ENCODE measurements at regions of chr3 and their contacts with region 1.

Region 1: GRCh38 chr3:194671900-194672808 is at the start of gene LSG1:
- DNase-seq: peak; percentile 87 to 97
- ATAC-seq: peak; percentile 96
- H3K4me3 ChIP-seq: peak within 1 kb of the TSS; percentile 97
- H3K4me3 Mint-ChIP-seq: peak within 1 kb of the TSS; percentile 98
- H3K27ac ChIP-seq: peak within 1 kb of the TSS; percentile 98
- H3K27ac Mint-ChIP-seq: peak within 1 kb of the TSS; percentile 98 to 99
- H3K4me1 ChIP-seq: peaks cover 14% of the 10 kb centered on the region
- H3K4me1 Mint-ChIP-seq: peaks cover 29 to 40% of the 10 kb centered on the region in 2 donors
- H3K27me3 ChIP-seq: no peaks in the 10 kb centered on the region
- H3K27me3 Mint-ChIP-seq: peaks cover 0 to 6% of the 10 kb centered on the region in 2 donors
- CTCF ChIP-seq: no peak
- total RNA-seq, gene LSG1: 56.4 to 67.6 (median 64.9) TPM

Region 2: DNA sequence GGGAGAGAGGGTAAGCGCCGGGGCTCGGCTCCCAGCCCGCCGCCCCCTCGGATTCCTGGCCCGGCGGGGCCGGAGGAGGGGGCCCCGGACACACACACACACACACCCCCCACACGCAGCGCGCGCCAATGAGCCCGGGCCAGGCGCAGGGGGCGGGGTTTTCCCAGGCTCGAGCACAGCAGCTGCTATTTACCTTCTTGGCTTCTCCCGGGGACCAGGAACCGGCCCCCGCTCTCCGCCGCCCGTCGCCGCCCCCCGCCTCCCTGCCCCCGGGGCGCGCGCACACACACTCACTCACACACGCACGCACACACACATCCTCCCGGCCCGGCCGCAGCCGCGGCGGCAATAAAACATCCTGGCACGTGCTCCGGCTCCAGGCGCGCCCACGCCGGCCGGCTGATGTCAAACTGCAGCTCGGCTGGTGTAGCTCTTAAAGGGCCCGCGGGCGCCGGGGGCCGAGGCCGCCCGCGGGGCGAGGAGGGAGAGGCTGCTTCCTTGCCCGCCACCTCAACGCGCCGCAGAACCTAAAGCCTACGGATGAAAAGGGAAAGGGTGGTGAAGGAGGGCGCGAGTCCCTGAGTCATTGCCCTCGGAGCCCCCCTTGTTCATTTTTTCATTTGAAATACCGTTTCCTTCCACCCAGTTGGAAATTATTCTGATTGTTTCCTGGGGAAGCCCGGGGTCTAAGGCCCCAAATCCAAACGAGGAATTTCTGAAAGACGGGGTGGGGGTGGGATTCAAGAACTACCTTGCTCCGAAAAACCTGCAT is 537.2 kb before region 1 on chr3:
- intact Hi-C with region 1: no loop called
- DNase-seq: peak; percentile 77 to 89
- ATAC-seq: peak; percentile 46 to 72 (median 59)
- H3K4me3 ChIP-seq: peak overlapping the region; percentile 48
- H3K4me3 Mint-ChIP-seq: peak overlapping the region; percentile 93
- H3K27ac ChIP-seq: peak overlapping the region; percentile 60
- H3K27ac Mint-ChIP-seq: peak overlapping the region; percentile 86 to 94
- H3K4me1 ChIP-seq: peaks cover 50% of the 10 kb centered on the region
- H3K4me1 Mint-ChIP-seq: peaks cover 38 to 45% of the 10 kb centered on the region in 2 donors
- H3K27me3 ChIP-seq: peaks cover 78% of the 10 kb centered on the region
- H3K27me3 Mint-ChIP-seq: peaks cover 60 to 66% of the 10 kb centered on the region in 2 donors
- CTCF ChIP-seq: no peak

Region 3: GRCh38 chr3:194323785-194324735 is 348.1 kb before region 1 on chr3:
- intact Hi-C with region 1: no loop called
- DNase-seq: peak; percentile 33 to 66
- ATAC-seq: peak; percentile 49 to 73 (median 60)
- H3K4me3 ChIP-seq: peak overlapping the region; percentile 26
- H3K4me3 Mint-ChIP-seq: no peak overlapping the region
- H3K27ac ChIP-seq: no peak overlapping the region
- H3K27ac Mint-ChIP-seq: no peak overlapping the region
- H3K4me1 ChIP-seq: peaks cover 11% of the 10 kb centered on the region
- H3K4me1 Mint-ChIP-seq: peaks cover 0 to 7% of the 10 kb centered on the region in 2 donors
- H3K27me3 ChIP-seq: no peaks in the 10 kb centered on the region
- H3K27me3 Mint-ChIP-seq: peaks cover 10 to 12% of the 10 kb centered on the region in 2 donors
- CTCF ChIP-seq: no peak

Region 4: DNA sequence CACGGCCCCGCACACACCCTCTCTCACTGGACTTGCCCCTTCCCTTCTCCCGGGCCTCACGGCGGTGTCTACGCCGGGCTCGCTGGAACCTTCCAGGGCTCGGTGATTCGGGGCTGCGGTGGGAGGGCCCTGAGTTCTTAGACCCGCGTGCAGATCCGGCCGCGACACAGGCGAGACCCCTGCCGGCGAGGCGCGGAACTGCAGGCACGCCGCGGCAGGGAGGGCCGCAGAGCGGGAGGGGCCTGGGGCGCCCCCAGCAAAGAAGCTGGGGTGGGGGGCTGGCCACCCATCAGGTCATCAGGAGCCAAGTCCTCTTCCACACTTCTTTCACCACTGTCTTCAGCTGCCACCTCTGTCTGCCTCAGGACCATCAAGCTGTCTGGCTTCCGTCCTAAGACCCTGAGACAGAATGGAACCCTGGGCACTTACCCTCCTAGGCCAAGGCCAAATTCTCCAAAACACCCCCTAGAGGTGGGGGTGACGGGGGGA is 434.3 kb after region 1 on chr3:
- intact Hi-C with region 1: loop called (anchors 1 kb)
- DNase-seq: peak; percentile 74 to 82
- ATAC-seq: peak; percentile 89 to 99 (median 98)
- H3K4me3 ChIP-seq: no peak overlapping the region
- H3K4me3 Mint-ChIP-seq: peak overlapping the region; percentile 43
- H3K27ac ChIP-seq: no peak overlapping the region
- H3K27ac Mint-ChIP-seq: peak overlapping the region in 1 of 2 donors; percentile 55
- H3K4me1 ChIP-seq: peaks cover 14% of the 10 kb centered on the region
- H3K4me1 Mint-ChIP-seq: peaks cover 12 to 15% of the 10 kb centered on the region in 2 donors
- H3K27me3 ChIP-seq: no peaks in the 10 kb centered on the region
- H3K27me3 Mint-ChIP-seq: no peaks in the 10 kb centered on the region
- CTCF ChIP-seq: peak; percentile 99